Caco-2 (cell line): ENCODE measurements at regions of chr11 and their contacts with region 1.

Region 1: DNA sequence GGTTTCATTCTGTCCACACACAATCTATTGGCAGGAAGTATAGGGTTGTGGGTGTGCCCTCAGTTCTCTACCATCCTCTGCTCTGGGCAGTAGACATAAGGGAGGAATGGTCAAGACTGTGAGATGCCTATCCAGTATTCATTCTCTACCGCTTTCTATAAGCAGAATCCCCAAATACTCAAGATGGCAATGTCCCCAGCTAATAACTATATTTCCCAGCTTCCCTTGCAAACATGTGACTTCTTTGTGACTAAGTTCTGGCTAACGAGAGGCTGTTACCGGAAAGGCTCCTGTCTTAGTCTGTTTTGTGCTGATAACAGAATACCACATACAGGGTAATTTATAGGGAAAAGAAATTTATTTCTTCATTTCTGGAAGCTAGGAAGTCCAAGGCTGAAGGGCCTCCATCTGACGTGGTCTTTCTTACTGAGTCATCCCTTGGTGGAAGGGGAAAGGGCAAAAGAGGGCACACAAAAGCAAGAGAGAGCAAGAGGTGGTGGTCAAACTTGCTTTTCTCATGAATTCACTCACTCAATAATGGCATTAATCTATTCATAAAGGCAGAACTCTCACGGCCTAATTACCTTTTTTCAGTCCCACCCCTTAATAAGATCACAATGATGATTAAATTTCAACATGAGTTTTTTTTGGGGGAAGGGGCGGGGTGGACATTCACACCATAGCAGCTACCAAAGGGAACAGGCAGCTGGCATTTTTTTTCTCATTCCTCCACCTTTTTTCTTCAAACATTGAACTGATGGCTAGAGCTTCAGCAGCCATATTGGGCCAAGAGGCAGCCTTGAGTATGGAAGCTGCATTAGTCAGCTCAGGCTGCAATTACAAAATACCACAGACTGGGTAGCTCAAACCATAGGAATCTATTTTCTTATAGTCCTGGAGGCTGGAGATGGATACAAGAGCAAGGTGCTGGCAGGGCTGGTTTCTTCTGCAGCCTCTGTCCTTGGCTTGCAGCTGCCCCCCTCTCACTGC is 109.7 kb upstream of the OR9Q1 start:
- DNase-seq: no peak
- H3K4me3 ChIP-seq: no peak overlapping the region
- H3K4me3 Mint-ChIP-seq: no peak overlapping the region
- H3K27ac Mint-ChIP-seq: no peak overlapping the region
- H3K4me1 ChIP-seq: no peaks in the 10 kb centered on the region
- H3K4me1 Mint-ChIP-seq: no peaks in the 10 kb centered on the region
- H3K27me3 ChIP-seq: no peaks in the 10 kb centered on the region
- H3K27me3 Mint-ChIP-seq: no peaks in the 10 kb centered on the region
- CTCF ChIP-seq: no peak

Region 2: GRCh38 chr11:58438486-58438885 is 524.5 kb after region 1 on chr11:
- CTCF ChIA-PET with region 1: no interaction called
- POLR2A ChIA-PET with region 1: no interaction called
- intact Hi-C with region 1: loop called (anchors 5 kb)
- DNase-seq: no peak
- H3K4me3 ChIP-seq: no peak overlapping the region
- H3K4me3 Mint-ChIP-seq: no peak overlapping the region
- H3K27ac Mint-ChIP-seq: no peak overlapping the region
- H3K4me1 ChIP-seq: no peaks in the 10 kb centered on the region
- H3K4me1 Mint-ChIP-seq: no peaks in the 10 kb centered on the region
- H3K27me3 ChIP-seq: no peaks in the 10 kb centered on the region; the same call in 1 of the 2 replicates
- H3K27me3 Mint-ChIP-seq: peaks cover 2% of the 10 kb centered on the region
- CTCF ChIP-seq: no peak